HepG2 (cell line): ENCODE measurements at regions of chr3 and their contacts with region 1.

Region 1: DNA sequence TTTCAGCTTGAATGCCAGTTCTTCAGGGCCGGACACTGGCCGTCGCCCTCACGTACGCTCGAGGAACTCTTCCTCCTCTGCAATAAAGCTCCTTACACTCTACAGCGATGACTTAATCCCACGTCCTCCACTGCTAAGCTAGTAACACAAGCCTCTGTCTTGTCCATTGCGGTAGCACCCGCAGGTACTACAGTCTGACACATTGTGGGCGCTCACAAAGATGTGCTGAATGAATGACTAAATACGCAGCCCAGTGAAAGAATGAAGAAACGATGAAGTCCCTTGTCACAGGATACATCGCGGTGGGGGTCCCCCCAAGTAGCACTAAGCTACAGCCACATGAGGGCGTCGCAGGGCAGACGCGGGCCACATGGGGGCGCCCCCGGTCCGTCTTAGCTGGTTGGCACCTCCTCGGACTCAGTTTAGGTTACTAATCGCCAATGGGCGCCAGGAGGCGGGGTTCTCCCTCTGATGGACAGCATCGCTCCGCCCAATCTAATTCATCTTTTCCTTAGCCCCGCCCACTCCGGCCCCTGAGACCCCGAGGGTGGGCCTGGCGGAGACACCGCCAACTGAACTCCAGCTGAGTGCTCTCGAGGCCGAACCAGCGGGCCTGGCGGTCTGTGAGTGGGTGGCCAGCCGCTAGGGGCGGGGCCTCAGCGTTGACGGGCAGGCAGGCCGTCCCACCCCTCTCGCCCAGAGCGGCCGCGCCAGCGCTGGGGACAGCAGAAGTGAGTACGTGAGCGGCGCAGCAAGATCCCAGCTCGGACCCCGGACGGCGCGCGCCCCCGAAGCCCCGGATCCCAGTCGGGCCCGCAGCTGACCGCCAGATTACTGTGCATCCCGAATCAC is at the start of gene EPHB3:
- DNase-seq: peak; percentile 92
- ATAC-seq: peak; percentile 95
- H3K4me3 ChIP-seq: peak within 1 kb of the TSS; percentile 43 to 68 (median 50); a peak in 5 of 6 replicates
- H3K27ac ChIP-seq: no peak within 1 kb of the TSS
- H3K4me1 ChIP-seq: peaks cover 27% of the 10 kb centered on the region
- H3K27me3 ChIP-seq: peaks cover 12 to 84% of the 10 kb centered on the region in 2 experiments
- CTCF ChIP-seq: peak; percentile 97
- EP300 ChIP-seq: no peak; a peak in 1 of 4 replicates
- POLR2A ChIP-seq: no peak
- RAD21 ChIP-seq: peak; percentile 98
- total RNA-seq, gene EPHB3: not detected in 2 replicates

Region 2: DNA sequence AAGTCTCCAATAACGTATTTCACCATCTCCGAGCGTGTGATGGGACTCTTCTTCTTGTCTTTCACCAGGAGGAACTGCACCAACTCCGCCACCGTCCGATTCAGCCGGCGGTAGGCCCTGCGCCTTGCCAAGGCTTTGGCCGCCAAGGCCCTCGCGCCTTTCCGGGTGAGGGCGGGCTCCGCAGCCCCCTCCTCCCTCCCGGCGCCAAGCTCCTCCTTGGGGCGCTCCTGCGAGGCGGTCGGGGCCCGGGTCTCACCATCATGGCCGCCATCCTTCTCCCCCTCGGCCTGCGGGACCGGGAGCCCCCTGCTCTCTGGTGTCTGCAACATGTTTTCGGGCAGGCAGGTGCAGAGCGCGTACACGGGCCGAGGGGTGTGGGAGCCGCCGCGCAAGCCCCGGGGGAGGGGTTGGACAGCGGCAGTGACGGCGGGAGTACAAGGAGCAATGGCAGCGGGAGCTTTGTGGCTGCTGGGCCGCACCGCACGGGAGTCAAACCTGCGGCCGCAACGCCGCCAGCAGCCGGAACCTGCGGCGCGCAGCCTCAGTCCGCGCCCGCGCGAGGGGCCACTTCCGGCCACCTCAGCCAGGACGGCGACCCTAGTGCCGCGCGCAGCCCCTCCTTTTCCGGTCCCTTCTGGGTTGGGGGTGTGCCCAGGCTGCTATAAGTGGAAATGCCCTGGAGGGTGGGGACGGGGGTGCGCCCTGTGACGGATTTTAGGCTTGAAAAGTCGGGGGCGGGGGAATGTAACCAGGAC is 150.4 kb after region 1 on chr3 and contains the start of gene MAGEF1:
- CTCF ChIA-PET with region 1: no interaction called
- POLR2A ChIA-PET with region 1: interaction called, 11 read pairs
- in situ Hi-C with region 1: no loop called
- intact Hi-C with region 1: loop called (anchors 5 kb)
- DNase-seq: peak; percentile 79
- ATAC-seq: peak; percentile 97
- H3K4me3 ChIP-seq: peak within 1 kb of the TSS; percentile 75 to 94 (median 83)
- H3K27ac ChIP-seq: peak within 1 kb of the TSS; percentile 96
- H3K4me1 ChIP-seq: peaks cover 27% of the 10 kb centered on the region
- H3K27me3 ChIP-seq: no peaks in the 10 kb centered on the region; a peak in 1 of 5 replicates
- CTCF ChIP-seq: no peak
- EP300 ChIP-seq: no peak
- POLR2A ChIP-seq: peak; percentile 88 to 90
- RAD21 ChIP-seq: no peak; the same call in none of the 2 replicates
- total RNA-seq, gene MAGEF1: 60.5 and 62.4 TPM in 2 replicates

Region 3: GRCh38 chr3:184727357-184728009 is 166.2 kb after region 1 on chr3:
- CTCF ChIA-PET with region 1: interaction called, 16 read pairs
- POLR2A ChIA-PET with region 1: interaction called, 3 read pairs
- in situ Hi-C with region 1: no loop called
- intact Hi-C with region 1: no loop called
- DNase-seq: peak; percentile 75
- ATAC-seq: peak; percentile 97
- H3K4me3 ChIP-seq: no peak overlapping the region
- H3K27ac ChIP-seq: no peak overlapping the region
- H3K4me1 ChIP-seq: peaks cover 11% of the 10 kb centered on the region; the same call in 1 of the 2 replicates
- H3K27me3 ChIP-seq: peaks cover 0 to 2% of the 10 kb centered on the region in 2 experiments; a peak in 3 of 5 replicates
- CTCF ChIP-seq: peak; percentile 82
- EP300 ChIP-seq: no peak
- POLR2A ChIP-seq: no peak
- RAD21 ChIP-seq: peak; percentile 43; the same call in 1 of the 2 replicates

Region 4: GRCh38 chr3:184748219-184749135 is 187.2 kb after region 1 on chr3:
- CTCF ChIA-PET with region 1: interaction called, 9 read pairs
- POLR2A ChIA-PET with region 1: no interaction called
- in situ Hi-C with region 1: no loop called
- intact Hi-C with region 1: loop called (anchors 1 kb)
- DNase-seq: peak; percentile 13
- ATAC-seq: peak; percentile 96
- H3K4me3 ChIP-seq: no peak overlapping the region
- H3K27ac ChIP-seq: no peak overlapping the region
- H3K4me1 ChIP-seq: no peaks in the 10 kb centered on the region
- H3K27me3 ChIP-seq: peaks cover 1 to 30% of the 10 kb centered on the region in 2 experiments
- CTCF ChIP-seq: peak; percentile 70
- EP300 ChIP-seq: no peak
- POLR2A ChIP-seq: no peak
- RAD21 ChIP-seq: 0 out of 2 replicates have a peak, but pooled peaks have one; percentile 19

Region 5: DNA sequence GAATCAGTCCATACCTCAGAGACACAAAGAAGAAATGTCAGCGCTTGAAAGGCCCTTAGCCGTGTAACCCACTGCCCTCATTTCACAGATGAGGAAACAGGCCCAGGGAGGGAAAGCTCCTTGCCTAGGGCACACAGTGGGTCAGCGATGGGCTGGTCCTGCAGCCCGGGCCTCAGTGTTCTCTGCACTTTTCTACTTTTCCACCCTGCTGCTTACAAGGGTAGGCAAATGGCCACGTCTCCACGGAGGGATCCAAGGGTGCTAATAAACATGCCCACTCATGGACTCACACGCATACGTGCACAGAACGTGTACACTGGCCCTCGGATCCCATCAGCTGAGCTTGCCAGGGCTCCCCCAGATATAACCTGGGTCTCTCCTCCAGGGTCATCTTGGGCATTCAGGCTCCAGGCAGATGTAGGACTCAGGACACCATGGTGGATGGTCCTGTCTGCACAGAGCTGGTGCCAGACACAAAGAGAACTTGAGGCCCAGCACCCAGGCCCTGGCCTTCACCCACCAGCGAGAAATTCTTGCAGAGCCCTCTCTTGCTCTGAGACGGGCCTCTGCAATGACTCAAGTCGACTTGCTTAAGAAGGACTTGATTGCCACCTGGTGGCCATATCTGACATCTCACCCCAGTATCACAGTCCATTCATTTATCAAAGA is 216.2 kb after region 1 on chr3:
- CTCF ChIA-PET with region 1: no interaction called
- POLR2A ChIA-PET with region 1: no interaction called
- in situ Hi-C with region 1: no loop called
- intact Hi-C with region 1: loop called (anchors 1 kb)
- DNase-seq: peak; percentile 83
- ATAC-seq: peak; percentile 86
- H3K4me3 ChIP-seq: no peak overlapping the region
- H3K27ac ChIP-seq: no peak overlapping the region
- H3K4me1 ChIP-seq: peaks cover 5% of the 10 kb centered on the region; the same call in 1 of the 2 replicates
- H3K27me3 ChIP-seq: peaks cover 3 to 36% of the 10 kb centered on the region in 2 experiments
- CTCF ChIP-seq: peak; percentile 85
- EP300 ChIP-seq: no peak
- POLR2A ChIP-seq: no peak
- RAD21 ChIP-seq: peak; percentile 79

Region 6: DNA sequence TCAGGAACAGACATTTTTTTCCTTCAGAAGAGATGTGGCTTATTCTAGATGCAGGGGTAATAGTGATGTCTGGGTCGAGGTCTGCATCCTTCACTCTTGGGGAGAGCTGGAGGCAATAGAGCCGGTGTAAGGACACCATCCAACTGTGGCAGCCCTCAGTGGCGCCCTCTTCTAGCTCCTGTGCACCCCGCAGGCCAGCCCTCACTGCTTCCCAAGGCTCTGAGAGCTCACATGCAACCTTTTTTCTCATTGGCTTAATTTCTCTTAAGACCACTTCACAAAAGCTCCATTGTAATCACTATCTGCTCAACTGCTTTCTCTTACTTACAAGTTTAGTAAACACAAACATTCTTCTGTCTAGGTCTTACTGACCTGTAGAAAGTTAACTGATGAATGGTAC is 246.7 kb after region 1 on chr3:
- CTCF ChIA-PET with region 1: interaction called, 6 read pairs
- POLR2A ChIA-PET with region 1: no interaction called
- in situ Hi-C with region 1: no loop called
- intact Hi-C with region 1: loop called (anchors 1 kb)
- DNase-seq: peak; percentile 20
- ATAC-seq: 0 out of 3 replicates have a peak, but pooled peaks have one; percentile 20
- H3K4me3 ChIP-seq: no peak overlapping the region
- H3K27ac ChIP-seq: no peak overlapping the region
- H3K4me1 ChIP-seq: peaks cover 33% of the 10 kb centered on the region
- H3K27me3 ChIP-seq: no peaks in the 10 kb centered on the region; a peak in 1 of 5 replicates
- CTCF ChIP-seq: 0 out of 2 replicates have a peak, but pooled peaks have one; percentile 25
- EP300 ChIP-seq: no peak
- POLR2A ChIP-seq: no peak
- RAD21 ChIP-seq: no peak

Region 7: GRCh38 chr3:186166036-186166435 is 1604.7 kb after region 1 on chr3:
- CTCF ChIA-PET with region 1: no interaction called
- POLR2A ChIA-PET with region 1: no interaction called
- in situ Hi-C with region 1: no loop called
- intact Hi-C with region 1: no loop called
- DNase-seq: no peak
- ATAC-seq: no peak
- H3K4me3 ChIP-seq: no peak overlapping the region
- H3K27ac ChIP-seq: no peak overlapping the region
- H3K4me1 ChIP-seq: no peaks in the 10 kb centered on the region
- H3K27me3 ChIP-seq: no peaks in the 10 kb centered on the region
- CTCF ChIP-seq: no peak
- EP300 ChIP-seq: no peak
- POLR2A ChIP-seq: no peak
- RAD21 ChIP-seq: no peak